ENCODE measurements at regions of chr1 and their contacts with region 1.

Region 1: GRCh38 chr1:93093332-93094006 is 14.4 kb downstream of the MTF2 start:
- DNase-seq: no peak
- H3K4me3 ChIP-seq: no peak overlapping the region
- CTCF ChIP-seq: no peak

Region 2: GRCh38 chr1:93078986-93079654 is 14.3 kb before region 1 on chr1 and contains the start of gene MTF2:
- CTCF ChIA-PET with region 1: interaction called, 10 read pairs
- POLR2A ChIA-PET with region 1: interaction called, 3 read pairs
- DNase-seq: peak; percentile 86
- H3K4me3 ChIP-seq: peak within 1 kb of the TSS; percentile 97
- CTCF ChIP-seq: no peak